Panc1 (cell line): ENCODE measurements at regions of chr11 and their contacts with region 1.

Region 1: DNA sequence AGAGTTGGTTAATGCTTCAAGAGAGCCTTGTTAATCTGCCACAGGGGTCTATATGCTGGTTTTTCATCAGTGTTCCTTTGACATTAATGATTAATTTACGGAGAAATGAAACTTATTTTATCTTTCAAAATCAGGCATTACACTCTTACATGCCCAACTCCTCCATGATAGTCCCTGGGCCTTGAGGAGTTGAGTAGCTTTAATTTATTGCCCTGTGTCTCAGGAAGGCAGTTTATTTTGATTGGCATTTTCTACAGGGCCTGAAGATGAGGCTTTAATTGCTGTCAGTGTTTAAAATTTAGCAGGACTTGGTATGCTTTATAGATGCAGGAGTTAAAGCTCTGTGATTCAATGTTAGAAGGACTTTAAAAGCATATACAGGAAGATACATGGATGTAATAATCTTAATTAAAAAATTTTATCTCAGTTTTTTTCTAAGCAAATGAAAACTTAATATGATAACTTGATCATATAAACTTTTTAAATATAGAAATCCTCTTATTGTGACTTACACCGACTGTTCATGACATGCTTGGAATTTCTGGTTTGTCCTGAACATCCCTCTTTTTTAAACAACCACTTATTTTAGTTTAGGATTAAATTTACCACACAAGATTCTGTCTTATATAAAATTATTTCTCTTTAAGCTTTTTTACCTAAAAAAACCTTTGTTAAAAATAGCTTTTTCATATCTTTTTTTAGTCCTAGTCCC is 12.2 kb downstream of the GLYAT start:
- DNase-seq: no peak
- ATAC-seq: no peak
- H3K4me3 ChIP-seq: no peak overlapping the region
- H3K27ac ChIP-seq: no peak overlapping the region
- H3K4me1 ChIP-seq: no peaks in the 10 kb centered on the region
- H3K27me3 ChIP-seq: no peaks in the 10 kb centered on the region
- CTCF ChIP-seq: no peak

Region 2: GRCh38 chr11:58782066-58782465 is 62.5 kb after region 1 on chr11:
- CTCF ChIA-PET with region 1: no interaction called
- POLR2A ChIA-PET with region 1: no interaction called
- in situ Hi-C with region 1: no loop called
- intact Hi-C with region 1: loop called (anchors 2 kb)
- DNase-seq: no peak
- ATAC-seq: no peak
- H3K4me3 ChIP-seq: no peak overlapping the region
- H3K27ac ChIP-seq: no peak overlapping the region
- H3K4me1 ChIP-seq: no peaks in the 10 kb centered on the region
- H3K27me3 ChIP-seq: no peaks in the 10 kb centered on the region
- CTCF ChIP-seq: no peak